Activated naive CD4-positive, alpha-beta T cell treated with anti-CD3 and anti-CD28 coated beads for 36 hours (primary cell): ENCODE measurements at regions of chr5 and their contacts with region 1.

Region 1: GRCh38 chr5:75236322-75237316 is at the start of gene ANKRD31:
- DNase-seq: peak; percentile 88
- H3K4me3 Mint-ChIP-seq: peak within 1 kb of the TSS; percentile 95
- H3K27ac Mint-ChIP-seq: peak within 1 kb of the TSS; percentile 97
- H3K4me1 Mint-ChIP-seq: peaks cover 17% of the 10 kb centered on the region
- H3K27me3 Mint-ChIP-seq: no peaks in the 10 kb centered on the region
- total RNA-seq, gene ANKRD31: 0.35 to 0.36 TPM

Region 2: DNA sequence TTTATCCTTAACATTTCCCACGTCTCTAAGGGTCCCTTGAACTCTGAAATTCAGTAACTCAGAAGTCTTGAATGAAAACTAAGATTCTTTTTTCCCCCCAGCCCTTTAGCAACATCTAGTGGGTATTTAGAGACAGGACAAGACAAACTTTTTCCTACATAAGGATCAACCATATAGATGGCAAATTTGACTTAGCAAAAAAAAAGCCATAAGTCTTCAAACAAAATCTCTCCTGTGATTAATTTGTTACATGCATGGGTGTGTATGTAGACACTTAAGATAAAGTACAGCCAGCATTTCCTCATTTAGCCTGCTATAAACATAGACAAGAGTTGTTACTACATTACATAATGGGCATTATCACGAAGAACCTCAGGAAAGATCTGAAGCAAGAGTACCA is 29.1 kb after region 1 on chr5:
- CTCF ChIA-PET with region 1: interaction called, 6 read pairs
- intact Hi-C with region 1: loop called (anchors 1 kb)
- DNase-seq: no peak
- H3K4me3 Mint-ChIP-seq: no peak overlapping the region
- H3K27ac Mint-ChIP-seq: no peak overlapping the region
- H3K4me1 Mint-ChIP-seq: no peaks in the 10 kb centered on the region
- H3K27me3 Mint-ChIP-seq: no peaks in the 10 kb centered on the region

Region 3: DNA sequence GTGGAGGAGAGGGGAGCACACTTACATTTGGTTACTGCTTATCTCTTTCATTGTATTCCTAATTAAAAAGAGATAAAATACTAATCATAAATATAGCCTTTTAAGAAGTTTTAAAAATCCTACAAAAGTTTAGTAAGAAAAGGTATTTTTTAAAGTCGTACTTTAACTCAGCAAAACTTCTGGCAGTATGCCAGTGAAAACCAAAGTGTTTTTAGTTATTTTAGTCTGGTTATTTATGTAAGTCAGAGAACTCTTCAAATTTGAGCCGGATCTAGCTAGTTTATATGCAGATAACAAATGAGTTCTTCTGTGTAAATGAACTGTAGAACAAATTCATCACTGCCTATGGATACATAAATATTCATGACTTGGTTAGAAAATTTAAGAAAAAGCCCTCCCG is 338.2 kb after region 1 on chr5:
- CTCF ChIA-PET with region 1: no interaction called
- intact Hi-C with region 1: loop called (anchors 2 kb)
- DNase-seq: no peak
- H3K4me3 Mint-ChIP-seq: no peak overlapping the region
- H3K27ac Mint-ChIP-seq: peak overlapping the region; percentile 50
- H3K4me1 Mint-ChIP-seq: peaks cover 10% of the 10 kb centered on the region
- H3K27me3 Mint-ChIP-seq: no peaks in the 10 kb centered on the region

Region 4: DNA sequence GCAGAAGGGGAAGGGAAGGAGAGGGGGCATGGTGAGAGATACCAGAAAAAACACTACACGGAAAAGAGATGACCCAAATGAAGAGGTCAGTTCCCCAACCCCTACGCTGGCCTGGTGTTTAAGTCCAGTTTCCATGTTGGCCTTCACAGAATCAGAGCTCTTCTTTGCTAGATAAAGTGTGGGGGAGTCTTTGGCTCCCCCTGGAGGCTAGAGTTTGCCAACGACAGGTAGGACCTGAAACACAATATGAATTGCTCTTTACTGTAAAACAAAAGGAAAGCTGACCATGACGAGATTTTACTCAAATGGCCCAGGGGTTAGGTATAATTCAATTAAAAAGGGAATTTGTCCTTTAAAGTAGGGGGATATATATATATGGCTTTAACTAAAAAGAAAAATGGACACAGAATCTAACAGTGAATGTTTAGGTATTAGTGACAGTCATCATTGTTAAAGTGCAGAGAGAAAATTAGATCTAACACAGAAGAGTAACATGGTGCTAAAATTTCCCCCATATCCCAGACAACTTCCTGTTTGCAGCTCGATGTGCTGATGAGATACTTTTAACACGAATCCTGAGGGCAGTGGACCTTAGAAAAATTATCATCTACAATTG is 938.5 kb after region 1 on chr5:
- CTCF ChIA-PET with region 1: no interaction called
- intact Hi-C with region 1: loop called (anchors 10 kb)
- DNase-seq: peak; percentile 67
- H3K4me3 Mint-ChIP-seq: no peak overlapping the region
- H3K27ac Mint-ChIP-seq: no peak overlapping the region
- H3K4me1 Mint-ChIP-seq: peaks cover 14% of the 10 kb centered on the region
- H3K27me3 Mint-ChIP-seq: no peaks in the 10 kb centered on the region